ENCODE measurements at regions of chr17 and their contacts with region 1.

Region 1: DNA sequence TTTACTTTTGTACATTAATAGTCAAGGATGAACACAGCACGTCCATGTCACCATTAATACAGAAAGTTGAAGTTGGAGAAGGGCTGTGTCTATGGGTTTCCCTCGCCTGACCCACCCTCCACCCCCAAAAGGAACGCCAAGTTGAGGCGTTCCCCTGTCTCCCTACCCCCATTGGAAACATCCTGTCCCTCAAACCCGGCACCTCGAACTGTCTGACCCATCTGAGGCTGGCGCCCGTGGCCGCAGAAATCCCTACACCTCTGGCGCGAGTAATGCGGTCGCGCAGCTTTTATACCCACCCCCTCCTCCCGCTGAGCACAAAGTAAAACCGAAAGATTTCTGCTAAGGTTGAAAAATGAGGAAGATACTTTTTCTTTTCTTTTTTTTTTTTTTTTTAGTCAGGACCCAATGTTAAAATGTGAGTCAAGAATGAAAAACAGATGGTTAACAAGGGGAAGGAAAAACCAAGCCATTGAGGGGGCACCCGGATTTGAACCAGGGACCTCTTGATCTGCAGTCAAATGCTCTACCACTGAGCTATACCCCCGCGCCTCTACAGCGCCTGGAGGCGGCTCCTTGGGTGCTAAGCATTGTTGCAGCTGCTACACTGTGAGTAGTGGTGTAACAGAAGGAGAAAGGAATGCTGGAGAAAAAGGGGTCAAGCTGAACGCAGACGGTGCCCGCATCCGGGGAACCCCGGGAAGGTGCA is 887 bp upstream of the LASP1 start:
- DNase-seq: peak; percentile 79
- ATAC-seq: peak; percentile 55
- H3K4me3 ChIP-seq: peak overlapping the region; percentile 83 to 98
- H3K27ac ChIP-seq: peak overlapping the region; percentile 97
- H3K4me1 ChIP-seq: peaks cover 58 to 85% of the 10 kb centered on the region in 2 experiments
- H3K27me3 ChIP-seq: no peaks in the 10 kb centered on the region
- CTCF ChIP-seq: peak in 2 of 3 experiments; percentile 26 to 27; a peak in 4 of 6 replicates
- POLR2A ChIP-seq: no peak
- RAD21 ChIP-seq: 0 out of 2 replicates have a peak, but pooled peaks have one; percentile 9

Region 2: DNA sequence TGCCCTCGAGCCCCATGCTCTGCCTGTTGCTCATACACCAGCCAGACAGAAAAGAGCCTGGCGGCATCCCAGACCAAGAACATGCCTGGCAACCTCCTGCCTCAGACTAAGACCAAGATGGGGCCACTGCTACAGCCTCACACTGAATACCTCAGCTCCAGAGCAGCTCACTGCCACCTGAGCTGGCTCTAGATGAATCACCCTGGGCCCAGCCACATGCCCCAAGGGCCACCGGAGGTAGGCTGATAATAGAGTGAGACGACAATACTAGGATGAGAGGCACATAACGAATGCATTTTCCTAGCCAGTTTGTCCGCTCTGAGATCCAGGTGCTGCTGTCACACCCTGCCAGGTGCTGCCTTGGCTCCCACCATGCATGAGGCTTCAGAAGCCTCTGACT is 82.6 kb before region 1 on chr17:
- CTCF ChIA-PET with region 1: no interaction called
- POLR2A ChIA-PET with region 1: no interaction called
- RAD21 ChIA-PET with region 1: no interaction called
- intact Hi-C with region 1: no loop called
- DNase-seq: no peak
- ATAC-seq: no peak
- H3K4me3 ChIP-seq: no peak overlapping the region
- H3K27ac ChIP-seq: no peak overlapping the region
- H3K4me1 ChIP-seq: no peaks in the 10 kb centered on the region
- H3K27me3 ChIP-seq: no peaks in the 10 kb centered on the region
- CTCF ChIP-seq: no peak
- POLR2A ChIP-seq: no peak
- RAD21 ChIP-seq: no peak

Region 3: GRCh38 chr17:38848557-38848891 is 20.4 kb before region 1 on chr17:
- CTCF ChIA-PET with region 1: interaction called, 4 read pairs
- POLR2A ChIA-PET with region 1: interaction called, 55 read pairs
- RAD21 ChIA-PET with region 1: interaction called in 1 of 2 experiments, 5 read pairs
- intact Hi-C with region 1: no loop called
- DNase-seq: no peak
- ATAC-seq: no peak; the same call in 1 of the 2 replicates
- H3K4me3 ChIP-seq: no peak overlapping the region
- H3K27ac ChIP-seq: peak overlapping the region; percentile 16; the same call in 1 of the 2 replicates
- H3K4me1 ChIP-seq: peaks cover 9 to 25% of the 10 kb centered on the region in 2 experiments; a peak in 3 of 4 replicates
- H3K27me3 ChIP-seq: no peaks in the 10 kb centered on the region
- CTCF ChIP-seq: no peak
- POLR2A ChIP-seq: no peak
- RAD21 ChIP-seq: no peak

Measured in HCT116 (cell line).